Endothelial cell of umbilical vein (primary cell): ENCODE measurements at regions of chr5 and their contacts with region 1.

Region 1: GRCh38 chr5:170740551-170741205 is 42.8 kb upstream of the GABRP start:
- DNase-seq: no peak
- H3K4me3 ChIP-seq: no peak overlapping the region
- H3K27ac ChIP-seq: no peak overlapping the region
- H3K4me1 ChIP-seq: peaks cover 6% of the 10 kb centered on the region
- H3K27me3 ChIP-seq: no peaks in the 10 kb centered on the region
- CTCF ChIP-seq: no peak
- POLR2A ChIP-seq: no peak

Region 2: GRCh38 chr5:170638454-170639220 is 102.0 kb before region 1 on chr5:
- CTCF ChIA-PET with region 1: interaction called, 16 read pairs
- POLR2A ChIA-PET with region 1: no interaction called
- dilution Hi-C with region 1: no loop called
- intact Hi-C with region 1: loop called (anchors 1 kb)
- DNase-seq: peak; percentile 44
- H3K4me3 ChIP-seq: no peak overlapping the region
- H3K27ac ChIP-seq: no peak overlapping the region
- H3K4me1 ChIP-seq: peaks cover 14% of the 10 kb centered on the region
- H3K27me3 ChIP-seq: peaks cover 2 to 5% of the 10 kb centered on the region in 2 experiments
- CTCF ChIP-seq: peak; percentile 79 to 83
- POLR2A ChIP-seq: no peak

Region 3: GRCh38 chr5:170791325-170791954 is 50.8 kb after region 1 on chr5:
- CTCF ChIA-PET with region 1: interaction called, 452 read pairs
- POLR2A ChIA-PET with region 1: interaction called, 7 read pairs
- dilution Hi-C with region 1: no loop called
- intact Hi-C with region 1: loop called (anchors 1 kb)
- DNase-seq: peak; percentile 66
- H3K4me3 ChIP-seq: no peak overlapping the region
- H3K27ac ChIP-seq: no peak overlapping the region
- H3K4me1 ChIP-seq: no peaks in the 10 kb centered on the region
- H3K27me3 ChIP-seq: no peaks in the 10 kb centered on the region
- CTCF ChIP-seq: peak; percentile 64 to 69
- POLR2A ChIP-seq: no peak

Region 4: GRCh38 chr5:170896779-170897178 is 156.1 kb after region 1 on chr5:
- CTCF ChIA-PET with region 1: interaction called, 23 read pairs
- POLR2A ChIA-PET with region 1: no interaction called
- dilution Hi-C with region 1: no loop called
- intact Hi-C with region 1: loop called (anchors 1 kb)
- DNase-seq: peak; percentile 9
- H3K4me3 ChIP-seq: no peak overlapping the region
- H3K27ac ChIP-seq: no peak overlapping the region
- H3K4me1 ChIP-seq: peaks cover 6% of the 10 kb centered on the region
- H3K27me3 ChIP-seq: no peaks in the 10 kb centered on the region
- CTCF ChIP-seq: peak; percentile 49 to 63
- POLR2A ChIP-seq: no peak

Region 5: GRCh38 chr5:170917113-170917512 is 176.4 kb after region 1 on chr5:
- CTCF ChIA-PET with region 1: interaction called, 12 read pairs
- POLR2A ChIA-PET with region 1: no interaction called
- dilution Hi-C with region 1: no loop called
- intact Hi-C with region 1: loop called (anchors 5 kb)
- DNase-seq: peak; percentile 6
- H3K4me3 ChIP-seq: no peak overlapping the region
- H3K27ac ChIP-seq: no peak overlapping the region
- H3K4me1 ChIP-seq: no peaks in the 10 kb centered on the region
- H3K27me3 ChIP-seq: no peaks in the 10 kb centered on the region
- CTCF ChIP-seq: no peak
- POLR2A ChIP-seq: no peak

Region 6: GRCh38 chr5:171336521-171337209 is 596.0 kb after region 1 on chr5:
- CTCF ChIA-PET with region 1: interaction called, 44 read pairs
- POLR2A ChIA-PET with region 1: no interaction called
- dilution Hi-C with region 1: no loop called
- intact Hi-C with region 1: loop called (anchors 1 kb)
- DNase-seq: peak; percentile 73
- H3K4me3 ChIP-seq: peak overlapping the region; percentile 35 to 66 (median 60)
- H3K27ac ChIP-seq: no peak overlapping the region
- H3K4me1 ChIP-seq: peaks cover 7% of the 10 kb centered on the region
- H3K27me3 ChIP-seq: peaks cover 8 to 11% of the 10 kb centered on the region in 2 experiments
- CTCF ChIP-seq: peak; percentile 58 to 83
- POLR2A ChIP-seq: no peak

Region 7: GRCh38 chr5:171342362-171343111 is 601.9 kb after region 1 on chr5:
- CTCF ChIA-PET with region 1: interaction called, 44 read pairs
- POLR2A ChIA-PET with region 1: no interaction called
- dilution Hi-C with region 1: no loop called
- intact Hi-C with region 1: loop called (anchors 1 kb)
- DNase-seq: peak; percentile 64
- H3K4me3 ChIP-seq: no peak overlapping the region
- H3K27ac ChIP-seq: no peak overlapping the region
- H3K4me1 ChIP-seq: no peaks in the 10 kb centered on the region
- H3K27me3 ChIP-seq: no peaks in the 10 kb centered on the region
- CTCF ChIP-seq: peak; percentile 57 to 61
- POLR2A ChIP-seq: no peak

Region 8: DNA sequence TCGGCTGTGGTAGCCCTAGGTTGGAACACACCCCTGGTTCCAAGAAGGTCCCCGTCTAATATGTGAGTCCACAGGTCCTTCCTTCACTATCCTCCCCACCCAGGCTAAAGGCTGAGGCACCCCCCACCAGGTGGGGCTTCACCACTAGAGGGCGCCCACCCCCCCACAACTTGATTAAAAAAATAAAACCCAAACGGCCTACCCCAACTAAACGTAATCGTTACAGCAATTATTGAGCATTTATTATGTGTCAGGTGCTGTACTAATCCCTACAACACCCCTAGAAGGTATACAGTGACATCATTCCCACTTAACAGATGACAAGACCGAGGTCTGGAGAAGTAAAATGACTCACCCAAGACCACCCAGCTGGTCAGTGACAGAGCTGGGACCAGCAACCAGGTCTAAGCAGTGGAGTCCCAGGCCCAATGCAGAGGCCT is 743.8 kb after region 1 on chr5:
- CTCF ChIA-PET with region 1: no interaction called
- POLR2A ChIA-PET with region 1: no interaction called
- dilution Hi-C with region 1: no loop called
- intact Hi-C with region 1: no loop called
- DNase-seq: peak; percentile 33
- H3K4me3 ChIP-seq: no peak overlapping the region
- H3K27ac ChIP-seq: no peak overlapping the region
- H3K4me1 ChIP-seq: no peaks in the 10 kb centered on the region
- H3K27me3 ChIP-seq: peaks cover 0 to 2% of the 10 kb centered on the region in 2 experiments
- CTCF ChIP-seq: peak; percentile 71 to 83
- POLR2A ChIP-seq: no peak